ENCODE measurements at regions of chr15 and their contacts with region 1.

Region 1: DNA sequence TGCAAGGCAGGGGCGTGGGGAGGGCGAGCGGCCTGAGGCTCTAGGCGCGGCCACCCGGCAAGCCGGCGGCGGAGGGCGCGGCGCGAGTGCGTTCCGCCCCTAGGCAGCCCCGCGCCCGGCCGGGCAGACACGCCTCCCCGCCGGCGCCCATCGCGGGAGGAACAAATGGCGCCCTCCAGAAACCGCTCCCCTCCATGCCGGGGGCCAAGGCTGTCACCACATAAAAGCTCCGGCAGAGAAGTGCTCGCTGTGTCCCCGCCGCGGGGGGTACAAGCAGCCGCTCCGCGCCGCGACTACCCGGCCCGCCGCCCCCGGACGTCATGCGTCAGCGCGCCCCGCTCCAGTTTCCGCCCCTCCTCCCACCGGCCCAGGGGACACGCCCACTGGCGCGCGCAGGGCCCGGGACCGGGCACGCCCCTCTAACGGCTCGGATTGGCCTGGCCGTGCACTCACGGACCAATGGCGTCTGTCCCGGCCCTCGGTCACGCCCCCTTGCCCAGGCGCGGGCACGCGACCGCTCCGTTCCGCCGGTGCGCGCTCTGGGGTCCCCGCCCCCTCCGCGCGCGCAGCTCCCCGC is 391 bp upstream of the KLF13 start:
- DNase-seq: peak; percentile 91
- ATAC-seq: peak; percentile 84
- H3K4me3 ChIP-seq: peak overlapping the region; percentile 56 to 80
- H3K27ac ChIP-seq: peak overlapping the region; percentile 94
- H3K4me1 ChIP-seq: peaks cover 11 to 24% of the 10 kb centered on the region in 2 experiments; a peak in 2 of 4 replicates
- H3K27me3 ChIP-seq: no peaks in the 10 kb centered on the region
- CTCF ChIP-seq: no peak
- POLR2A ChIP-seq: peak; percentile 30
- RAD21 ChIP-seq: no peak

Region 2: GRCh38 chr15:31157644-31158091 is 168.6 kb before region 1 on chr15:
- CTCF ChIA-PET with region 1: no interaction called
- POLR2A ChIA-PET with region 1: no interaction called
- RAD21 ChIA-PET with region 1: no interaction called
- intact Hi-C with region 1: no loop called
- DNase-seq: no peak
- ATAC-seq: no peak
- H3K4me3 ChIP-seq: no peak overlapping the region
- H3K27ac ChIP-seq: no peak overlapping the region
- H3K4me1 ChIP-seq: no peaks in the 10 kb centered on the region
- H3K27me3 ChIP-seq: no peaks in the 10 kb centered on the region
- CTCF ChIP-seq: no peak
- POLR2A ChIP-seq: no peak
- RAD21 ChIP-seq: no peak

Region 3: DNA sequence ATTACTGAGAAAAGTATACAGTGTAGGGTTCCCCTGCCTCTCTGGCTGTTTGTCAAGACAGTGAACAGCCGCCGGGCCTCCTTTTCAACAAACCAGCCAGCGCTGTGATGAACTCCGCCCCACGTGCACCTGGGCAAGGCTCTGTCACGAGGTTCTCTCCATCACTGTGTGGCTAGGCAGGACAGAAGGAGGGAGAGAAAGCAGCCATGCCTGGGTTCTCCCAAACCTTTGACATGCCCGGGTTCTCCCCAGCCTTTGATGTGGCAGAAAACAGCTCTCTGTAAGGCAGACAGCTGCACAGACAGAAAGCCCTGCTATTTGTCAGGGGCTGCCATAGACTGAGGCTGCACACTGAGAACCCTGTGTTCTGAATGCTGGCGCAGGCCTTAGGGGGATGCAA is 123.3 kb before region 1 on chr15:
- CTCF ChIA-PET with region 1: no interaction called
- POLR2A ChIA-PET with region 1: no interaction called
- RAD21 ChIA-PET with region 1: no interaction called
- intact Hi-C with region 1: no loop called
- DNase-seq: no peak
- ATAC-seq: no peak
- H3K4me3 ChIP-seq: no peak overlapping the region
- H3K27ac ChIP-seq: no peak overlapping the region
- H3K4me1 ChIP-seq: no peaks in the 10 kb centered on the region
- H3K27me3 ChIP-seq: no peaks in the 10 kb centered on the region; the same call in 1 of the 2 replicates
- CTCF ChIP-seq: no peak
- POLR2A ChIP-seq: no peak
- RAD21 ChIP-seq: no peak

Region 4: DNA sequence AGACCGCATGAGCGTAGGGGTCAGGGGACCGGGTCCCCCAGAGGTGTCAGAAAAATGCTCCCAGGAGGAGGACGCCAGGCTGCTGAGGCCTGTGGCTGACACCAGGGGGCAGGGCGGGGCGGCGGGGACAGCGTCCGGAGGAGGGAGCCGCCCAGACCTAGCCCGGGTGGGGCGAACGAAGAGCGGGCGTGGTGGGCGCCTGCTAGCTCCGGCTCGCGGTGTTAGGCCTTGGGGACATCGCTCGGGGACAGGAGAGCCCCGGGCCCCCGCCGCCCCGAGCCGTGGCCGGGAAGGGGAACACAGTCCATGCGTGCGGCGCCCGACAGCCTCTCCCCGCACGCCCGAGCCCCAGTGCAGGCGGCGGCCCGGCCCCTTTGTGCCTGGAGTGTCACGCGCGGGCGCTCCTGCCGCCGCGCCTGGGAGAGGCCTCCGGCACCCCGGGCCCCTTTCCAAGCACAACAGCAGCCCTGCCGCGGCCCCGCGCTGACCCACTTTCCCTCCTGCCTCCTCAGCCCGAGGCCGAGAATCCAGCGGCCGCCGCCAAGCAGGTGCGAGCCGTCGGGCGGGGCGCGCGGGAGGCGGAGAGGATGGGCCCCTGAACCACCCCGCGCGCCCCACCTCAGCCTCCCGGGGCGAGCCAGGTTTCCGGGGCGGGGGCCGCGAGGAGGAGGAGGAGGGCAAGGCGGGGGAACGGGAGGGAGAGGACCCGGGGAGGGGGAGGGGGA is 110.6 kb before region 1 on chr15:
- CTCF ChIA-PET with region 1: interaction called, 5 read pairs
- POLR2A ChIA-PET with region 1: no interaction called
- RAD21 ChIA-PET with region 1: interaction called in 1 of 2 experiments, 3 read pairs
- intact Hi-C with region 1: loop called (anchors 1 kb)
- DNase-seq: no peak
- ATAC-seq: peak; percentile 89
- H3K4me3 ChIP-seq: peak overlapping the region; percentile 51 to 63
- H3K27ac ChIP-seq: peak overlapping the region; percentile 92
- H3K4me1 ChIP-seq: peaks cover 9 to 19% of the 10 kb centered on the region in 2 experiments; a peak in 3 of 4 replicates
- H3K27me3 ChIP-seq: no peaks in the 10 kb centered on the region
- CTCF ChIP-seq: peak; percentile 62 to 82 (median 76)
- POLR2A ChIP-seq: no peak
- RAD21 ChIP-seq: peak; percentile 63

Region 5: DNA sequence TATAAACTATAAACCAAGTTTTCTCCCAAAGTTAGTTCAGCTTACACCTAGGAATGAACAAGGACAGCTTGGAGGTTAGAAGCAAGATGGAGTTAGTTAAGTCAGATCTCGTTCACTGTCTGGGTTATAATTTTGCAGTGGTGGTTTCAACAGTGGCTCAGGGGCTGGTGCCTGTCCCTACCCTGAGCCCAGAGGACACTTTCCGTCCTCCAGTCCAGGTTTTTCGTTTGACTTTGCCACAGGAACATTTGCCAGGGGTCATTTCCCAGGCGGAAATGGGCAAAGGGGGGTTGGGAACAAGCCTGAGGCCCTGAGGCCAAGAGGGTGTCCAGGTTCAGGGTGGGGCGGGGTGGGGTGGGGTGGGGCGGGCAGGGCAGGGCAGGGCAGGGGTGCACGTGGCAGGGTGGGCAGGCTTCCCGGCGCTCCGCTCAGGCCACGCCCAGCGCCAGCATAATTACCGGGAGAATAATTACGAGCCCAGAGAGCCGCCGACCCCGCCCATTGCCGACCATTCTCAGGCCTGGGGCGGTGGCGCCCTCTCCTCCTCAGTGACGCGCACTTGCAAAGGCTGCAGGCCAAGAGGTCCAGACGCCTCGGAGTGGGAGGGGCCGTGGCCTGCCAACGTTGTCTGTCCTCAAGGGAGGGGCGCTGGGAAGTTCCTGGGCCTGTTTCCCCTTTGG is 70.8 kb after region 1 on chr15:
- CTCF ChIA-PET with region 1: no interaction called
- POLR2A ChIA-PET with region 1: no interaction called
- RAD21 ChIA-PET with region 1: no interaction called
- intact Hi-C with region 1: loop called (anchors 5 kb)
- DNase-seq: peak; percentile 66
- ATAC-seq: peak; percentile 83
- H3K4me3 ChIP-seq: peak overlapping the region in 1 of 2 experiments; percentile 45; a peak in 3 of 4 replicates
- H3K27ac ChIP-seq: peak overlapping the region; percentile 52
- H3K4me1 ChIP-seq: peaks cover 34 to 48% of the 10 kb centered on the region in 2 experiments
- H3K27me3 ChIP-seq: no peaks in the 10 kb centered on the region
- CTCF ChIP-seq: no peak
- POLR2A ChIP-seq: no peak
- RAD21 ChIP-seq: peak; percentile 18; the same call in 1 of the 2 replicates